ENCODE measurements at regions of chr5 and their contacts with region 1.

Region 1: DNA sequence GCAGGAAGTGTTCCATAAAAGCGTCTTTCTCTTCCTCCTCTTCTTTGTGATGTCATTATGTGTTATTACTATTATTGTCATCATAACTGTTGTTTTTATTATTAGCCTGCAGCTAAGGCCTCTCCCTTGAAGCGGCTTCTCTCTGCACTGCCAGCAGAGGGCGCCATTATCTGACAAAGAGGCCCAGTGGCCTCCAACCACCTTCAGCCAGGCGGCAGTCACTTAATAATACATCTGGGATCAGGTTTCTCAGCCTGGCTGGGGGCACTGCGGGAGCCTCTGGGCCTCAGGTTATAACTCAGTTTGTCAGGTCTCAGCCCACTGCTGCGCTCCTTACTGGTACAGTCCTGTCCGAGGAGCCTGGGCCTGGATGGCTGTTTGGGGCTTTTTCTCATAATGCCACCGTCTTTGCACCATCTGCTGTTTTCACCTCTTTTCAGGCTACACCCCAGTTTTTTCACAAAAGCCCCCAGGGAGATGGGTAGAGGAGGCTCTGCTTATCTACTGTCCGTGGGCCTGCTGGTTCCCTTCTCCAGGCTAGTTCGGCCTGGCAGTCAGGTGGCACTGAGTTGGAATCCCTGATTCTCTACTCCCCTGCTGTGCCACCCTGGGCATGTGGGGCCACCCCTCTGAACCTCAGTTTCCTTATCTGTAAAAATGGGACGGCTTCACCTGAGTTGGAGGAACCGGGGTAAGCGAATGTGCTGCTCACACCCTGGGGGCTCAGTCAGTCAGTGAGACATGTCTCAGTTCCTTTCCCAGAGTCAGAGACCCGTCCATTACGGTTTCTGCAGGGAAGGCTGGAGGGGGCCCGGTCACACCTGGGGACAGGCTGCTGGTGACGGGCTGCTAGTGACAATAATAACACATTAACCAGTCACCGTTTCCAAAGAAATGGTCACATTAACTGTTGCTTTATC is 282.1 kb downstream of the NSG2 start:
- H3K4me3 ChIP-seq: no peak overlapping the region
- H3K27ac ChIP-seq: peak overlapping the region; percentile 83
- H3K4me1 ChIP-seq: peaks cover 10% of the 10 kb centered on the region
- CTCF ChIP-seq: peak; percentile 95

Region 2: GRCh38 chr5:174311531-174312269 is 15.9 kb before region 1 on chr5:
- CTCF ChIA-PET with region 1: interaction called, 10 read pairs
- POLR2A ChIA-PET with region 1: no interaction called
- H3K4me3 ChIP-seq: peak overlapping the region; percentile 39
- H3K27ac ChIP-seq: no peak overlapping the region
- H3K4me1 ChIP-seq: no peaks in the 10 kb centered on the region
- CTCF ChIP-seq: peak; percentile 84

Region 3: DNA sequence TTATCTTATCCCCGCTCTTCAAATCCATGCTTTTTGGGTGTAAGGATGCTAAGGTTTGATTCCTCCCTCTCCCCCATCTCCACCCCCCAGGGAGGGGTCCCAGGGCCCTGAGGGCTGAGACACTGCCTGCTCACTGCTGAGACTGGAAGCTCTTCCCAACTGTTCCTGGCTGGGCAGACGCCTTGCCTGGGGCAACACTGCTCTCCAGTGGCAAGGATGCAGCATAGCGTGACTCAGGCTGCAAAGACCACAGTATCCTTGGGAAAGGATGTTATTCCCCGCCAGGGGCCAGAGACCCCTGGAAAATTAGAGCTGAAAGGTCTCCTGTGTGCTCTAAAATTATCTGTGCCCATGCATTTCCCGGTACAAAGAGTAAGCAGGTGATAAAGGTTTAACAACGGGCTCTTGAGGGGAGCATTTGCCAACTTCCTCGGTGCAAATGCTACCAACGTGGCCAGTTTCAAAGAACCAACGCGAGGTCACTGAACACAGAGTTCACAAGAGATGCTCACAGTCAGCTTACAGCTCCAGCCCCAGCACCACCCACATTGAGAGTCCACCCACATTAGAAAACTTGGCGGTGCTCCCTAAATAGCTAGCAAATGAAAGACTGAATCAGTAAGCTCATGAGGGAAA is 10.2 kb before region 1 on chr5:
- CTCF ChIA-PET with region 1: interaction called, 10 read pairs
- POLR2A ChIA-PET with region 1: no interaction called
- H3K4me3 ChIP-seq: no peak overlapping the region
- H3K27ac ChIP-seq: no peak overlapping the region
- H3K4me1 ChIP-seq: no peaks in the 10 kb centered on the region
- CTCF ChIP-seq: peak; percentile 92

Region 4: GRCh38 chr5:174448662-174449061 is 121.1 kb after region 1 on chr5:
- CTCF ChIA-PET with region 1: no interaction called
- POLR2A ChIA-PET with region 1: no interaction called
- H3K4me3 ChIP-seq: no peak overlapping the region
- H3K27ac ChIP-seq: no peak overlapping the region
- H3K4me1 ChIP-seq: no peaks in the 10 kb centered on the region
- CTCF ChIP-seq: no peak

Measured in HEK293 (cell line).